Mammary epithelial cell (primary cell): ENCODE measurements at regions of chr13 and their contacts with region 1.

Region 1: DNA sequence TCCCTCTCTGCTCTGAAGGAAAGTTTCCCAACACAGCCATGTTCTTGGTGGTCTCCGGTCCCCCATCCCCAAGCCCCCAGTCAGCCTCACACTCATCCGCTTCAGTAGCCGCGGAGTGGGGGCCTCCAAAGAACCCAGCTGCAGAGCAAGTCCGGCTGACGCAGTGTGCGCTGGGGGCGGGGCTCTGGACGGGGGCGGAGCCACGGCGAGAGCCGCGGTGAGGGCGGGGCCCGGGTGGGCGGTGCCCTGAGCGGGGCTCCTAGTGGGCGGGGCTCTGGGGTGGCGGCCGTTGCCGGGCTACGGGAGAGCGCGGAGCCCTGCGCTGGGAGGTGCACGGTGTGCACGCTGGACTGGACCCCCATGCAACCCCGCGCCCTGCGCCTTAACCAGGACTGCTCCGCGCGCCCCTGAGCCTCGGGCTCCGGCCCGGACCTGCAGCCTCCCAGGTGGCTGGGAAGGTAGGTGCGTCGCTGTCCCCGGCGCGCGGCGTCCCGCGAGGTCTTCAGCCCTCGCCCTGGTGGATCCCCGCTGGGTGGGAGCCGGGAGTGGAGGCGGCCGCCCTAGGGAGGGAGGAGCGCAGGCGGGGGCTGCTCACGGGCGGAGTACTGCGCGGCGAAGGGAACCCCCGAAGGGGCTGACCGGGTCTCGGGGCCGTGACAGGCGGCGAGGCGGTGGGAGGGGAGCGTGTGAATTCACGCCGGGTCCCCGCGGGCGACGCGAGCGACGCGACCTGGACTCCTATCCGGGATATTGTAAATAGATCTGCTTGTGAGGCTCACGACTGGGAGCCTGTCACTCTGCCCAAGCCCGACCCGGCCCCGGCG is 9.1 kb downstream of the TNFRSF19 start:
- DNase-seq: peak; percentile 82
- H3K4me3 ChIP-seq: peak overlapping the region; percentile 65 to 97 (median 68)
- H3K27ac ChIP-seq: peak overlapping the region; percentile 39
- H3K4me1 ChIP-seq: peaks cover 8% of the 10 kb centered on the region
- H3K27me3 ChIP-seq: peaks cover 10% of the 10 kb centered on the region
- CTCF ChIP-seq: no peak

Region 2: DNA sequence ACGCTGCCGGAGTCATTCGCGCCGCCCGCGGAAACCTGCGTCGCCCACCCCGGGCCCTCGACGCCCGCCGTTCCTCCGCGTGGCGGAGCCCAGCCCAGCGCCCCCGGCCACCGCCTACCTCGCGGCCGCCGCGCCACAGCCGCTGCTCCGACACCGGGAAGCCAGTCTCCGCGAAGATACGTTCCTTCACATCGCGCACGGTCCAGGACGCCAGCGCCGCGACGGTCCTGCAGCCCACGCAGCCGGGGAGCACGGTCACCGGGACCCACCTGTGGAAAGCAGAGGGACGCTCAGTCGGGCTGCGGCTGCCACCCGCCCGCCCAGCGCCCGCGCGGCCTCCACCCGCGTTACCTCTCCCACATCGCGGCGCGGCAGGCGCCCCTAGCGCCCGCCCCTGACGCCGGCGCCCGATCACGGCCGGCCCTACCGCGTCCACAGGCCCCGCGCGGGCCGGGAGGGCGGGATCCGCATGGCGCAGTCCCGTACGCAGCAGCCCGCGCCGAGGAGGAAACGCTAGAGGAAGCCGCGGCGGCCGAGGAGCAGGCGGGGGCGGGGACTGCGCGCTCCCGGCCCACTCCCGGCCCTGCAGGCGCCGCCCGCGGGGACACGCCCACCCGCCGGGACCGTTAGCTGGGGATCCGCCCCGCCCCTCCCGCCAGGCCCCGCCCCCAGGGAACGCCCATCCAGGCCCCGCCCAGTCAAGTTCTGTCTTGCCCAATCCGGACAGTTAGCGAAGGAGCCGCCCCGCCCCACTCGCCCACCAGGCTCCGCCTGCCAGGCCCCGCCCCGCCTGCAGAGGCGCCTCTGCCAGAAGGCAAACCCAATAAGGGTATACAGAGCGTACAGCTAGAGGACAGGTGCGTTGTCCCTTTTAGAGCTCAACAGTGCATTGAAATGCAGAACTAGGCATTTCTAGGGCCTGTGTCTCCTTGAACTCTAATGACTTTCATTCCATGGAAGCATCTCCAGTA is 204.0 kb before region 1 on chr13:
- CTCF ChIA-PET with region 1: no interaction called
- dilution Hi-C with region 1: no loop called
- in situ Hi-C with region 1: no loop called
- intact Hi-C with region 1: no loop called
- DNase-seq: peak; percentile 87
- H3K4me3 ChIP-seq: peak overlapping the region; percentile 64 to 94 (median 90)
- H3K27ac ChIP-seq: peak overlapping the region; percentile 20
- H3K4me1 ChIP-seq: peaks cover 33% of the 10 kb centered on the region
- H3K27me3 ChIP-seq: no peaks in the 10 kb centered on the region
- CTCF ChIP-seq: no peak

Region 3: GRCh38 chr13:23466144-23467002 is 112.9 kb before region 1 on chr13:
- CTCF ChIA-PET with region 1: no interaction called
- dilution Hi-C with region 1: no loop called
- in situ Hi-C with region 1: no loop called
- intact Hi-C with region 1: loop called (anchors 2 kb)
- DNase-seq: peak; percentile 75
- H3K4me3 ChIP-seq: peak overlapping the region; percentile 40 to 48 (median 45)
- H3K27ac ChIP-seq: no peak overlapping the region
- H3K4me1 ChIP-seq: peaks cover 9% of the 10 kb centered on the region
- H3K27me3 ChIP-seq: peaks cover 6% of the 10 kb centered on the region
- CTCF ChIP-seq: peak; percentile 44 to 59

Region 4: GRCh38 chr13:23516702-23517101 is 62.6 kb before region 1 on chr13:
- CTCF ChIA-PET with region 1: no interaction called
- dilution Hi-C with region 1: no loop called
- in situ Hi-C with region 1: no loop called
- intact Hi-C with region 1: loop called (anchors 5 kb)
- DNase-seq: no peak
- H3K4me3 ChIP-seq: no peak overlapping the region
- H3K27ac ChIP-seq: no peak overlapping the region
- H3K4me1 ChIP-seq: no peaks in the 10 kb centered on the region
- H3K27me3 ChIP-seq: peaks cover 2% of the 10 kb centered on the region
- CTCF ChIP-seq: no peak

Region 5: GRCh38 chr13:23558675-23559536 is 20.4 kb before region 1 on chr13:
- CTCF ChIA-PET with region 1: no interaction called
- dilution Hi-C with region 1: no loop called
- in situ Hi-C with region 1: no loop called
- intact Hi-C with region 1: loop called (anchors 2 kb)
- DNase-seq: peak; percentile 97
- H3K4me3 ChIP-seq: peak overlapping the region; percentile 9 to 32 (median 29)
- H3K27ac ChIP-seq: peak overlapping the region; percentile 92
- H3K4me1 ChIP-seq: peaks cover 21% of the 10 kb centered on the region
- H3K27me3 ChIP-seq: no peaks in the 10 kb centered on the region
- CTCF ChIP-seq: no peak

Region 6: DNA sequence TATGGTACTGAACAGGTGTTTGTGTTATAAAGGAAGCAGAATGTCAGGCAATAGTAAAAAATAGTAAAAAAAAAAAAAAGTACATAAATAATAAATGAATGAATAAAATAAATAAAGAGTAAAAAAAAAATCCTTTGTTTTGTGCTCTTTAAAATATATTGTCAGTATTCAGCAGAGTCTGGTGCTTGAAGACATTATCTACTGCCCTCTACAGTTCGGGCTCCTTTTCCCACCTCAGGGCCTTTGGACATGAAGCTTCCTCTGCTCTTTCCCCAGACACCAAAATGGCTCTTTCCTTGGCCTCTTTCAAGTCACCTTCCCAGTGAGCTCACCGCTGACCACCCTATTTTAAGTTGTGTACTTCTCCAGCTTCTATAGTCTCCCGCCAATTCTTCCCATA is 128.4 kb after region 1 on chr13:
- CTCF ChIA-PET with region 1: no interaction called
- dilution Hi-C with region 1: no loop called
- in situ Hi-C with region 1: no loop called
- intact Hi-C with region 1: loop called (anchors 2 kb)
- DNase-seq: no peak
- H3K4me3 ChIP-seq: no peak overlapping the region
- H3K27ac ChIP-seq: no peak overlapping the region
- H3K4me1 ChIP-seq: no peaks in the 10 kb centered on the region
- H3K27me3 ChIP-seq: no peaks in the 10 kb centered on the region
- CTCF ChIP-seq: peak; percentile 20 to 49